ENCODE measurements at regions of chr3 and their contacts with region 1.

Region 1: DNA sequence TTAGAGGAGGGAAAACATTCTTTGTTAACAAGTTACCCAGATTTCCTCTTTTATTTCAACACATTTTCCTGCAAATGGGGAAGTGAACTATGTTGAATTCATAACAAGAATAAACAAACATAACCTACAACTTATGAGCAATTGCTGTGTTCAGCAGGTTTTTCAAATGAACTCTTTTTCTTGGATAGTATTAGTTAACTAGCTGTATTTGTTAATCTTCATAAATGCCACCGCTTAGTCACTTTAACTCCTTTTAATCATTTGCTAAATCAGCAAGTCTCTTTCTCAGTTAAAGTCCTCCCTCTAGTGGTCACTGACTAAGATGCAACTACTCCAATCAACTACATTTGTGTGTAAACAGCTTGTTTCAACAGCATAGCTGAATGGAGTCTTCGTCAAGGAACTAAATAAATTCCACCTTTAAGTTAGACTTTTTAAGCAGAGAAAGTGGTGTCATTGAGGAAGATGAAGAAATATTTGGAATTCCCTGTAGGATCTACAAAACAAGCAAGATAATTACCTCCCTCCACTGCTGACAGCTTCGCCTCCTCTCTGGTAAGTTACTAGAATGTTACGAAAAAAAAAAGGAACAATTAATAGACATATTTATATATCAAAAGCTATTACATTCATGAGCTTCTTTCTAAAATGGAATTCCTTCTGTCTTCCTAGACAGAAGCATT is 1122.0 kb downstream of the ROBO1 start:
- DNase-seq: no peak
- ATAC-seq: 0 out of 2 replicates have a peak, but pooled peaks have one; percentile 43
- H3K4me3 Mint-ChIP-seq: no peak overlapping the region
- H3K27ac Mint-ChIP-seq: no peak overlapping the region
- H3K4me1 Mint-ChIP-seq: peaks cover 57% of the 10 kb centered on the region
- H3K27me3 Mint-ChIP-seq: no peaks in the 10 kb centered on the region
- CTCF ChIP-seq: peak; percentile 87

Region 2: DNA sequence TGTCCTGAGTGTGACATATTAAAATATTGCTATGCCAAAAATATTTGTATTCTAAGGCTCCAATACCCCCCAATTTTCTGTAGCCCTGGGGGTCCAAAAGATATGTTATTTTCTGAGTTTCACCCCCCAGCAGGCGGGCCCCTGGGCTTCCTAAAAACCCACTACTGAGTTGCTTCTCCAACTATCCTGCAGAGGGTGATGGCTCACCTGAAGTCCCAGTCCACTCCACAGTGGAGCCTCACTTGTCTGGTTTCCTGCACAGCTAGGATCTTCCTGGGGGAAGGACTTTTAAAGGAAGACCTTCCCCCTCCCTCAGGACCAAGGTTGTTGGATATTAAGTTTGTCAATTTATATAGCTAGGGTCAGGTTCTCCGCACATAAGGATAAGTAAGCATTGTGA is 424.5 kb before region 1 on chr3:
- CTCF ChIA-PET with region 1: interaction called, 21 read pairs
- POLR2A ChIA-PET with region 1: no interaction called
- DNase-seq: no peak
- ATAC-seq: peak; percentile 76
- H3K4me3 Mint-ChIP-seq: no peak overlapping the region
- H3K27ac Mint-ChIP-seq: no peak overlapping the region
- H3K4me1 Mint-ChIP-seq: peaks cover 10% of the 10 kb centered on the region
- H3K27me3 Mint-ChIP-seq: no peaks in the 10 kb centered on the region
- CTCF ChIP-seq: no peak

Region 3: DNA sequence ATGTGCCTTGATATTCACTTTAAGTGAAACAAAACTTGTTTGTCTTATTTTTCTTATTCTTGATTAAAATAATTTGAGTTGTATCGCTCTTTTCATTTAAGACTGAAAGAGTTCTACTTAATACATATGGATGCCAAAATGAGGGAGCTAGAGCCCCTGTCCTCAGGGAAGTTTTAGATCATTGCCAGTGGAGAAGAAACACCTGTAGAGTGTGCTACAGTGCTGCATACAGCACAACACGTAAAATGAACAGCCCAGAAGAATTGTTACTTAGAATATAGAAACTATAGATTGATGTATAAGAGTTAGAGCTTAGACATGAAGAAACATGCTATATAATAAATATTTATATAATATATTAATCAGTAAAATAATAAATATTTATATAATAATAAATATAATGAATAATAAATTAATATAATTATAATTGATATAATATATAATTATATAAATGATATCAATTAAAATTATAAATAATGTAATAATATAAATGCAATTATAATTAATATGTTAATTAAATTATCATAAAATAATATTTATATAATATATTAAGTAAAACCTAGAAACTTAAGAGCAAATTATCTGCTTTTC is 371.2 kb before region 1 on chr3:
- CTCF ChIA-PET with region 1: interaction called, 25 read pairs
- POLR2A ChIA-PET with region 1: no interaction called
- DNase-seq: no peak
- ATAC-seq: peak; percentile 71
- H3K4me3 Mint-ChIP-seq: no peak overlapping the region
- H3K27ac Mint-ChIP-seq: no peak overlapping the region
- H3K4me1 Mint-ChIP-seq: peaks cover 29% of the 10 kb centered on the region
- H3K27me3 Mint-ChIP-seq: no peaks in the 10 kb centered on the region
- CTCF ChIP-seq: no peak

Measured in WTC11 (cell line).